GM12878 (cell line): ENCODE measurements at regions of chr2 and their contacts with region 1.

Region 1: DNA sequence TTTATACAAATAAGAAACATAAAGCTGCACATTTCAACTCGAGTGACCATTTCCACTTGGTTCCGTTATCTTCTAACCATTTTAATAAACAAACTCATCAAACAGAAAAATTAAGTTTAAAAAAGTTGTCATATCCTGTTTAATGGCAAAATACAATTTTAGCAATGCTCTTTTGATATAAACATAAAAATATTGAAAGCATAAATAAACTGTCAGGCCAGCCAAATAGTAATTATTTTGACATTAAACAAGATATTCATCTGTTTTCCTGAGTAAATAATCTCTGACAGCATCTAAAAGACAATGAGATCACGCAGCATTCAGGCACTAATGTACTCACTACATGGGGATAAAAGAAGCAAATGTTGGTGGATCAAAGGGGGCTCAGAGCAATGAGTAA is 145.3 kb upstream of the ATP5MC3 start:
- DNase-seq: no peak
- ATAC-seq: no peak
- H3K4me3 ChIP-seq: no peak overlapping the region
- H3K27ac ChIP-seq: no peak overlapping the region
- H3K4me1 ChIP-seq: no peaks in the 10 kb centered on the region
- H3K27me3 ChIP-seq: no peaks in the 10 kb centered on the region
- CTCF ChIP-seq: no peak
- EP300 ChIP-seq: no peak
- POLR2A ChIP-seq: no peak
- RAD21 ChIP-seq: no peak

Region 2: GRCh38 chr2:175111200-175111657 is 215.6 kb before region 1 on chr2:
- CTCF ChIA-PET with region 1: interaction called, 12 read pairs
- POLR2A ChIA-PET with region 1: no interaction called
- RAD21 ChIA-PET with region 1: no interaction called
- SMC1A ChIA-PET with region 1: no interaction called
- in situ Hi-C with region 1: no loop called
- intact Hi-C with region 1: no loop called
- DNase-seq: peak; percentile 7
- ATAC-seq: peak; percentile 83
- H3K4me3 ChIP-seq: no peak overlapping the region
- H3K27ac ChIP-seq: no peak overlapping the region
- H3K4me1 ChIP-seq: no peaks in the 10 kb centered on the region
- H3K27me3 ChIP-seq: no peaks in the 10 kb centered on the region
- CTCF ChIP-seq: peak; percentile 62 to 69 (median 67)
- EP300 ChIP-seq: no peak
- POLR2A ChIP-seq: no peak
- RAD21 ChIP-seq: peak; percentile 81

Region 3: DNA sequence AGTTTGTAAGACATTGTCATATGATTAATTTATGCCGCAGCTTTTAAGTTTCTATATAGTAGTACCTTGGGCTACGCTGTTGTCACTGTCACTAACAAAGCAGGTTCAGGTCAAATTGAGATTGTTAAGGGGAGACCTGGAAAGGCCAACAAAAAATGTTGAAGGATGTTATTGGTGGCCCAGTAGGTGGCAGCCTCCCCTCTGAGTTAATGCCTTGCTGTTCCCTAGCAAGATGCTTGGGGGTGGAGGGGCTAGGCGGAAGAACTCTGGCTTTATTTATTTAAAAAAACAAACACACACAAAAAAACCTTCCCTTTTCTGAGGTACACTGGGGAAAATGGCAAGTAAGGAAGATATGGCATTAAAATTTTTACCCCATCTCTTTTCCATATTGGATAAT is 17.0 kb before region 1 on chr2:
- CTCF ChIA-PET with region 1: interaction called, 5 read pairs
- POLR2A ChIA-PET with region 1: no interaction called
- RAD21 ChIA-PET with region 1: no interaction called
- SMC1A ChIA-PET with region 1: no interaction called
- in situ Hi-C with region 1: no loop called
- intact Hi-C with region 1: loop called (anchors 2 kb)
- DNase-seq: no peak
- ATAC-seq: peak; percentile 84
- H3K4me3 ChIP-seq: no peak overlapping the region
- H3K27ac ChIP-seq: no peak overlapping the region
- H3K4me1 ChIP-seq: no peaks in the 10 kb centered on the region
- H3K27me3 ChIP-seq: peaks cover 0 to 2% of the 10 kb centered on the region in 2 experiments; a peak in 1 of 4 replicates
- CTCF ChIP-seq: peak; percentile 42 to 48 (median 45); a peak in 5 of 6 replicates
- EP300 ChIP-seq: no peak
- POLR2A ChIP-seq: no peak
- RAD21 ChIP-seq: peak; percentile 48